Mammary epithelial cell (primary cell): ENCODE measurements at regions of chr2 and their contacts with region 1.

Region 1: GRCh38 chr2:28610583-28611201 is 114.8 kb downstream of the PLB1 start:
- DNase-seq: peak; percentile 98
- H3K4me3 ChIP-seq: no peak overlapping the region
- H3K27ac ChIP-seq: peak overlapping the region; percentile 71
- H3K4me1 ChIP-seq: peaks cover 52% of the 10 kb centered on the region
- H3K27me3 ChIP-seq: no peaks in the 10 kb centered on the region
- CTCF ChIP-seq: no peak

Region 2: DNA sequence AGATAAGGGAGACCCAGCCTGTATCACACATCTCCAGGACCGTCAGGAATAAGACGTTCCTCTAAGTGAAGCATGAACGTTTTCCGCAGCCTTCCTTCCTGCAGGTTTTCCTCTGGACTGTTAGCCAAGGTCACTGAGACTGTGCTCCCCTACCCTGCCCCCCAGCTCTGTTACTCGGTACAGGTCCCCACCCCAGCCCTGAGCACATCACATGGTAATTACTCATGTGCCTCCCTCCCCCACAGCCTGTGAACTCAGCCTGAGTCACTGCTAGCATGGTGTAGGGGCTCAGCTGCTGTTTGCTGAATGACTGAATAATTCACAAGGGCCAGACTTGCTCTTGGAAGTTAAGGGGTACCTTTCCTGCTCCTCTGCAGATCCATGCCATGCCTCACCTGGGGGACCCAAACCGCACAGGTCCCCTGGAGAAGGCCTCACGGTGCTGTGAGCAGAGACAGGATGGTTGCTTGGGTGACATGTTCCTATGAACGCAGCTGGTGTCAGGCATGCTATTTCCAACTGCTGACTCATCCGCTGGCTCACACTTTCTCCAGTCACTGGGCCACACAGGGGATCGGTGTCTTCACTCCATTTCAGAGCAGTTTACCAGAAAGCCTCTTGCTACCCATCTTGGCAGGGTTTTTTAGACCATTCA is 26.7 kb before region 1 on chr2:
- CTCF ChIA-PET with region 1: no interaction called
- dilution Hi-C with region 1: no loop called
- in situ Hi-C with region 1: no loop called
- intact Hi-C with region 1: no loop called
- DNase-seq: peak; percentile 97
- H3K4me3 ChIP-seq: peak overlapping the region in 2 of 3 experiments; percentile 27 to 32
- H3K27ac ChIP-seq: peak overlapping the region; percentile 98
- H3K4me1 ChIP-seq: peaks cover 32% of the 10 kb centered on the region
- H3K27me3 ChIP-seq: no peaks in the 10 kb centered on the region
- CTCF ChIP-seq: no peak

Region 3: GRCh38 chr2:28594289-28595108 is 16.2 kb before region 1 on chr2:
- CTCF ChIA-PET with region 1: no interaction called
- dilution Hi-C with region 1: no loop called
- in situ Hi-C with region 1: no loop called
- intact Hi-C with region 1: loop called (anchors 1 kb)
- DNase-seq: peak; percentile 94
- H3K4me3 ChIP-seq: peak overlapping the region in 1 of 3 experiments; percentile 2
- H3K27ac ChIP-seq: peak overlapping the region; percentile 63
- H3K4me1 ChIP-seq: peaks cover 38% of the 10 kb centered on the region
- H3K27me3 ChIP-seq: no peaks in the 10 kb centered on the region
- CTCF ChIP-seq: peak; percentile 79 to 83

Region 4: DNA sequence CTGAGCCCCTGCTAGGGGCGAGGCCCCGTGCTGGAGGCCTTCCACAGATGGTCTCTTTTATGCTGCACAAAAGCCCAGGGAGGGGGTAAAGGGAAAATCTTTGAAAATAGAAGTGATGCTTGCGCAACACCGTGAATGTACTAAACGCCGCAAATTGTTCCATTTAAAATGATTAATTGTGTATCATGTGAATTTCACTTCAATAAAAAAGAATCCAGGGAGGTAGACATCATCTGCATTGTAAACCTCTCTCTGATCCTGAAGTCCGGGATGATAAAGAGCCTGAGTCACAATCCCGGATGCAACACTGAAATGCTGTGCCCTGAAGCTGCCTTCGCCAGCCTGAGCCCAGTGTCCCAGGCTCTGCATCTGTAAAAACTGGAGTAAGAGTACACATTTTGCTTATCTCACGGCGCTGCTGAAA is 33.2 kb after region 1 on chr2:
- CTCF ChIA-PET with region 1: no interaction called
- dilution Hi-C with region 1: no loop called
- in situ Hi-C with region 1: no loop called
- intact Hi-C with region 1: loop called (anchors 2 kb)
- DNase-seq: peak; percentile 93
- H3K4me3 ChIP-seq: no peak overlapping the region
- H3K27ac ChIP-seq: peak overlapping the region; percentile 96
- H3K4me1 ChIP-seq: peaks cover 40% of the 10 kb centered on the region
- H3K27me3 ChIP-seq: no peaks in the 10 kb centered on the region
- CTCF ChIP-seq: no peak

Region 5: GRCh38 chr2:28661589-28662001 is 50.9 kb after region 1 on chr2:
- CTCF ChIA-PET with region 1: no interaction called
- dilution Hi-C with region 1: loop called (anchors 5 kb)
- in situ Hi-C with region 1: no loop called
- intact Hi-C with region 1: loop called (anchors 5 kb)
- DNase-seq: peak; percentile 78
- H3K4me3 ChIP-seq: no peak overlapping the region
- H3K27ac ChIP-seq: no peak overlapping the region
- H3K4me1 ChIP-seq: peaks cover 42% of the 10 kb centered on the region
- H3K27me3 ChIP-seq: no peaks in the 10 kb centered on the region
- CTCF ChIP-seq: no peak

Region 6: DNA sequence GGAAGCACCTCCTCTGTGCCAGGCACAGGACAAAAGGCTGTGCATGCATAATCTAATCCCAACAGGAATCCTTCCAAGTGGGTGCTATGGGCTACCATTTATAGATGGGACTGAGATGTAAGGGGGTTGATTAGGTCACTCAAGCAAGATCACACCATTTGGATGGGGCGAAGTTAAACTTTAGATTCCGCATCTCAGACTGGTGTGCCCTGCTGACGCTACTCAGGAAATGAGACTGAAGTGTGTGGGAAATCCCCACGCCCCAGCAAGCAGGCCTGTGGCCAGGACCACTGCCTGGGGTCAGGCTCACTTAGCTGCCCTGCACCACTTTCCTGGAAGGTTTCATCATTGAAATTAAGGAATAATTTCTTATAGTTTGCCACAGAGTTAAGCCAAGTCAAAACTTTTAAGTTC is 70.5 kb after region 1 on chr2:
- CTCF ChIA-PET with region 1: no interaction called
- dilution Hi-C with region 1: no loop called
- in situ Hi-C with region 1: no loop called
- intact Hi-C with region 1: no loop called
- DNase-seq: peak; percentile 82
- H3K4me3 ChIP-seq: no peak overlapping the region
- H3K27ac ChIP-seq: peak overlapping the region; percentile 32
- H3K4me1 ChIP-seq: peaks cover 28% of the 10 kb centered on the region
- H3K27me3 ChIP-seq: no peaks in the 10 kb centered on the region
- CTCF ChIP-seq: no peak